CD8-positive, alpha-beta T cell (primary cell): ENCODE measurements at regions of chr15 and their contacts with region 1.

Region 1: DNA sequence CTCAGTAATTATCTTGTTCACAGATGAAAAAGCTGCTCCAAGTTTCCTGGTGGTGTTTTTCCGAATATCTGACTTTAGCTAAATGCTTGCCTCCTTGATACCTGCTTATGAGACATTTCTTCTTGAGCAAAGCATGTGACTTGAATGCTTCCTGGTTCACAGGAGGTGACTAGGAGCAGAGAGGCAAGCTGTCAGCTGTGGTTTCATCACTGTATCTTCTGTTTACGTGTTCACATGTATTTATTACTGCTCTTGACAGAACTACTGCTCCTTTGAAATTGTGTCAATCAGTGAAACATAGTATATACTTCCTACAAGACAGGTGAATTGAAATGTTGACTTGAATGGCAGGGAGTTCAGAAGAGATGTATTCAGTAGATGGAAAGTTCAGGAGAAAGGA is 8.9 kb upstream of the SPPL2A start:
- DNase-seq: peak in 3 of 9 experiments; percentile 30 to 69 (median 53)
- ATAC-seq: peak; percentile 84
- H3K4me3 ChIP-seq: no peak overlapping the region
- H3K4me3 Mint-ChIP-seq: no peak overlapping the region
- H3K27ac ChIP-seq: peak overlapping the region in 1 of 2 experiments; percentile 21
- H3K27ac Mint-ChIP-seq: peak overlapping the region; percentile 38
- H3K4me1 ChIP-seq: no peaks in the 10 kb centered on the region
- H3K4me1 Mint-ChIP-seq: peaks cover 11% of the 10 kb centered on the region
- H3K27me3 ChIP-seq: no peaks in the 10 kb centered on the region
- H3K27me3 Mint-ChIP-seq: no peaks in the 10 kb centered on the region
- CTCF ChIP-seq: no peak

Region 2: DNA sequence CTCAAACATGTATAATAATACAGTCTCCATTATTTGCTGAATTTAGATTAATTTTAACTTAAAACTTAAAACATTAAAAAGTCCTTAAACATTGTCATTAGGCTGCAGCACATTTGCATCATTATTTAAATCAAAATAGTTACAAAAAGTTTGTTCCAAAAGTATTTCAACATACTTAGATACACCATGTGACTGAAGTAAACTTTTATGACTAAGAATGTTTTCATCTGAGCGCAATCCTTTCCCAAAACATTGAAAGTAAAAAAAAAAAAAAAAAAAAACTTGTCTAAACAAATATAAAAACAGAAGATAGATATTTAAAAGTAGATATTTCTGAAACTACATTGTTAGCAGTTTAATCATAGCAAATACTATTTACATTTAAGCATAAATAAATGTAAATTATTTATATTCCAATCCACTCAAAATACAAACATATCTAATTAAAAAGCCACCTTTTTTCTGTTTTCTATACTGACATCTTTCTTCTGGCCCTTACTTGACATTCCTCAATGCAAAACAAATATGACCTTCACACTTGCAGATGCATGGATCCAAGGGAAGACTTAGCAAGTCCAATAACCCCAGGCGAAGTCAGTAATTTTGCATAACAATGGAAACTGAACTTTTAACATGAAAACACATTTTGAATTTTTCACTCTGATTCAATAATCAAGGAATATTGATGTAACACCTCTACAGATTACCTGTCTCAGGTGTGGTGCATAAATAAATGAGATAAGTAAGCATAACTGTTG is 1164.1 kb before region 1 on chr15:
- CTCF ChIA-PET with region 1: no interaction called
- POLR2A ChIA-PET with region 1: no interaction called
- intact Hi-C with region 1: loop called in 1 of 2 experiments (anchors 10 kb)
- DNase-seq: no peak
- ATAC-seq: no peak
- H3K4me3 ChIP-seq: no peak overlapping the region
- H3K4me3 Mint-ChIP-seq: no peak overlapping the region
- H3K27ac ChIP-seq: no peak overlapping the region
- H3K27ac Mint-ChIP-seq: no peak overlapping the region
- H3K4me1 ChIP-seq: no peaks in the 10 kb centered on the region
- H3K4me1 Mint-ChIP-seq: no peaks in the 10 kb centered on the region
- H3K27me3 ChIP-seq: no peaks in the 10 kb centered on the region
- H3K27me3 Mint-ChIP-seq: no peaks in the 10 kb centered on the region
- CTCF ChIP-seq: no peak

Region 3: GRCh38 chr15:50850003-50850402 is 75.6 kb after region 1 on chr15:
- CTCF ChIA-PET with region 1: no interaction called
- POLR2A ChIA-PET with region 1: no interaction called
- intact Hi-C with region 1: no loop called
- DNase-seq: no peak
- ATAC-seq: no peak
- H3K4me3 ChIP-seq: no peak overlapping the region
- H3K4me3 Mint-ChIP-seq: no peak overlapping the region
- H3K27ac ChIP-seq: no peak overlapping the region
- H3K27ac Mint-ChIP-seq: no peak overlapping the region
- H3K4me1 ChIP-seq: no peaks in the 10 kb centered on the region
- H3K4me1 Mint-ChIP-seq: no peaks in the 10 kb centered on the region
- H3K27me3 ChIP-seq: no peaks in the 10 kb centered on the region
- H3K27me3 Mint-ChIP-seq: peaks cover 2% of the 10 kb centered on the region
- CTCF ChIP-seq: no peak

Region 4: GRCh38 chr15:50940506-50940905 is 166.1 kb after region 1 on chr15:
- CTCF ChIA-PET with region 1: no interaction called
- POLR2A ChIA-PET with region 1: no interaction called
- intact Hi-C with region 1: no loop called
- DNase-seq: no peak
- ATAC-seq: no peak
- H3K4me3 ChIP-seq: no peak overlapping the region
- H3K4me3 Mint-ChIP-seq: no peak overlapping the region
- H3K27ac ChIP-seq: no peak overlapping the region
- H3K27ac Mint-ChIP-seq: no peak overlapping the region
- H3K4me1 ChIP-seq: no peaks in the 10 kb centered on the region
- H3K4me1 Mint-ChIP-seq: no peaks in the 10 kb centered on the region
- H3K27me3 ChIP-seq: no peaks in the 10 kb centered on the region
- H3K27me3 Mint-ChIP-seq: no peaks in the 10 kb centered on the region
- CTCF ChIP-seq: no peak